Activated naive CD4-positive, alpha-beta T cell treated with anti-CD3 and anti-CD28 coated beads, Interleukin-2, amount 10 ng/mL, durations not matched to agents 7 days and 5 days (primary cell): ENCODE measurements at regions of chr15 and their contacts with region 1.

Region 1: GRCh38 chr15:41936649-41937567 is 35.4 kb downstream of the EHD4 start:
- DNase-seq: peak; percentile 83
- H3K4me3 Mint-ChIP-seq: peak overlapping the region; percentile 53
- H3K27ac Mint-ChIP-seq: peak overlapping the region; percentile 97
- H3K4me1 Mint-ChIP-seq: peaks cover 77% of the 10 kb centered on the region
- H3K27me3 Mint-ChIP-seq: no peaks in the 10 kb centered on the region

Region 2: DNA sequence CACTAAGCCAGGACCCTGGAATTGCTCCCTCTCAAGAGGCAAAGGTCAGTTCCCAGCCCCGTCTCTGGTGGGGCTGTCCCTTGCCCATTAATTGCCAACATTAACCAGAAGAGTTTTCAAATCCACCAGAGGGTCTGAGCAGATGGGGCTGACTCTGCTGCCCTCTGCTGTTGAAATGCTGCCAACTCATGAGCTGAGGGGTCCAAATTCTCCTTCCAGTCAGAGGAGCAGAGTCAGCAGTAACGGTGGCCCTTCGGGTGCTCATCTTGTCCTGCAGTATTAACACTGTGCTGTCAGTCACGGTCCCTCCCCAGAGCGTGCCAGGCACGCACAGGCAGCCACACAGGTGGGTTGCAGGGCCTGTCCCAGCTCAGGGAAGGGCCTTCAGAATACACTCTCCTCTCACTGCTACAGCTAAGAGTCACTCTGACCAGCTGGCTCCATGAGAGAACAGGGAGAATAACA is 32.3 kb before region 1 on chr15:
- CTCF ChIA-PET with region 1: interaction called, 39 read pairs
- DNase-seq: peak; percentile 80
- H3K4me3 Mint-ChIP-seq: no peak overlapping the region
- H3K27ac Mint-ChIP-seq: peak overlapping the region; percentile 42
- H3K4me1 Mint-ChIP-seq: peaks cover 17% of the 10 kb centered on the region
- H3K27me3 Mint-ChIP-seq: no peaks in the 10 kb centered on the region

Region 3: GRCh38 chr15:41917767-41918430 is 19.0 kb before region 1 on chr15:
- CTCF ChIA-PET with region 1: interaction called, 13 read pairs
- DNase-seq: no peak
- H3K4me3 Mint-ChIP-seq: no peak overlapping the region
- H3K27ac Mint-ChIP-seq: no peak overlapping the region
- H3K4me1 Mint-ChIP-seq: peaks cover 8% of the 10 kb centered on the region
- H3K27me3 Mint-ChIP-seq: no peaks in the 10 kb centered on the region

Region 4: GRCh38 chr15:41957021-41957897 is 20.4 kb after region 1 on chr15:
- CTCF ChIA-PET with region 1: interaction called, 12 read pairs
- DNase-seq: no peak
- H3K4me3 Mint-ChIP-seq: no peak overlapping the region
- H3K27ac Mint-ChIP-seq: no peak overlapping the region
- H3K4me1 Mint-ChIP-seq: peaks cover 28% of the 10 kb centered on the region
- H3K27me3 Mint-ChIP-seq: no peaks in the 10 kb centered on the region

Region 5: GRCh38 chr15:41972253-41973242 is 35.6 kb after region 1 on chr15 and contains the start of gene EHD4:
- CTCF ChIA-PET with region 1: interaction called, 36 read pairs
- DNase-seq: peak; percentile 97
- H3K4me3 Mint-ChIP-seq: peak within 1 kb of the TSS; percentile 87
- H3K27ac Mint-ChIP-seq: peak within 1 kb of the TSS; percentile 95
- H3K4me1 Mint-ChIP-seq: peaks cover 55% of the 10 kb centered on the region
- H3K27me3 Mint-ChIP-seq: peaks cover 15% of the 10 kb centered on the region